CD8-positive, alpha-beta memory T cell (primary cell): ENCODE measurements at regions of chr15 and their contacts with region 1.

Region 1: GRCh38 chr15:39580117-39580484 is 778 bp upstream of the THBS1 start:
- DNase-seq: peak; percentile 66 to 90 (median 86)
- H3K4me3 ChIP-seq: no peak overlapping the region
- H3K4me3 Mint-ChIP-seq: peak overlapping the region; percentile 63 to 89 (median 81)
- H3K27ac ChIP-seq: no peak overlapping the region
- H3K27ac Mint-ChIP-seq: peak overlapping the region in 4 of 8 donors; percentile 25 to 78 (median 30)
- H3K4me1 ChIP-seq: peaks cover 6% of the 10 kb centered on the region
- H3K4me1 Mint-ChIP-seq: peaks cover 18 to 41% (median 30%) of the 10 kb centered on the region in 3 donors
- H3K27me3 ChIP-seq: peaks cover 13% of the 10 kb centered on the region
- H3K27me3 Mint-ChIP-seq: peaks cover 12 to 56% of the 10 kb centered on the region in 2 donors

Region 2: DNA sequence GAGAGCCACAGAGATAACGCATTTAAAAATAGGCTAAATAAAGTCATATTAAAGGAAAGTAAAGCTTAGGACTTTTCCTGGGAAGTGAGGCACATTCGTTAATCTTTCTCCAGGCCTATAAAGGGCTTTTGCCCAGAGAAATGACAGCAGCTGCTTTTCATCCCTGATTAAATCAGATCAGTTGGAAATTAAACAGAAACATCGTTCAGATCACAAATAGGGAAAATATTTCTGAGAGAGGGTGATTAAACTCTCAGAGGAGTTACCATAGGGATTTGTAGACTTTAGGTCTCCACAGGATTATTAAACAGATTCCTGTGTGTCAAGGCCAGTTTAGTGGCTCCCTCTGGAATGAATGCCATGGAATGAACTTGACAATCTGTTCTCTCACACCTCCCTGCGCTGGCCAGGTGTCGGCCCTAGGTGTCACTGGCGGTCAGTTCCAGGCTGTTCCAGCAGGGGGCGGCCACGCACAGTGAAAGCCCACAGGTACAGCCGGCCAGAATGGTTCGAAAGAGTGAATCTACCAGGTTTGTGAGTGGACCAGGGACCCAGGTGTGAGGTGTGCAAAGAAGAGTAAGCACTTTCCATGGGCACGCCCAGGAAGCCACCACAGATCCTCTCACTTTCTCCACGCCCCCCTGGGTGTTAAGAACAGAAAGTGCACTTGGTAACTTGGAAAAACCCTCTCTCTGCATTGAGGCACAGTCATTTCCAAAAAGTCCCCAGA is 762.5 kb before region 1 on chr15:
- CTCF ChIA-PET with region 1: interaction called, 11 read pairs
- POLR2A ChIA-PET with region 1: no interaction called
- DNase-seq: peak; percentile 62 to 83 (median 73)
- H3K4me3 ChIP-seq: no peak overlapping the region
- H3K4me3 Mint-ChIP-seq: peak overlapping the region in 2 of 7 donors; percentile 31 to 59
- H3K27ac ChIP-seq: no peak overlapping the region
- H3K27ac Mint-ChIP-seq: peak overlapping the region in 1 of 8 donors; percentile 17
- H3K4me1 ChIP-seq: no peaks in the 10 kb centered on the region
- H3K4me1 Mint-ChIP-seq: peaks cover 2 to 5% (median 5%) of the 10 kb centered on the region in 3 donors
- H3K27me3 ChIP-seq: no peaks in the 10 kb centered on the region
- H3K27me3 Mint-ChIP-seq: peaks cover 2 to 14% of the 10 kb centered on the region in 2 donors

Region 3: GRCh38 chr15:39124553-39125171 is 455.4 kb before region 1 on chr15:
- CTCF ChIA-PET with region 1: interaction called, 12 read pairs
- POLR2A ChIA-PET with region 1: no interaction called
- DNase-seq: no peak
- H3K4me3 ChIP-seq: no peak overlapping the region
- H3K4me3 Mint-ChIP-seq: no peak overlapping the region
- H3K27ac ChIP-seq: no peak overlapping the region
- H3K27ac Mint-ChIP-seq: no peak overlapping the region
- H3K4me1 ChIP-seq: no peaks in the 10 kb centered on the region
- H3K4me1 Mint-ChIP-seq: no peaks in the 10 kb centered on the region
- H3K27me3 ChIP-seq: no peaks in the 10 kb centered on the region
- H3K27me3 Mint-ChIP-seq: peaks cover 6 to 8% of the 10 kb centered on the region in 2 donors

Region 4: DNA sequence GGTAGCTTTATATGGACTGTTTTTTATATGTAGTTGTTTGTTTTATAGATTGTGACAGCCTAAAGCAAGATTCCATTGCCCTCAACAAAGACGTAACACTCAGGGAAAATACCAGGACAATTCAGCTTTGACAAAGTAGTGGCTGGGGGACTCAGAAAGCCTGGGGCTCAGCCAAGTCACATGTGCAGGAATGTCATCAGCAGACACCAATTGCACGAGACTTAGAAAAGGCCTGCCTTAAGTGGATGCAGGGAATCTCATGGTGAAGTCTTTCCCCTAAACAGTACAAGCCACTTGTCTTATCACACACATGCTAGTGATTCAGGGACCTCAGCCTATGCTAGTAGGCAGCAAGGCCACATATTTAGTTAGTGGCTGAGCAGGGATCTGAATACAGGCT is 381.0 kb before region 1 on chr15:
- CTCF ChIA-PET with region 1: no interaction called
- POLR2A ChIA-PET with region 1: no interaction called
- DNase-seq: no peak
- H3K4me3 ChIP-seq: no peak overlapping the region
- H3K4me3 Mint-ChIP-seq: no peak overlapping the region
- H3K27ac ChIP-seq: no peak overlapping the region
- H3K27ac Mint-ChIP-seq: no peak overlapping the region
- H3K4me1 ChIP-seq: no peaks in the 10 kb centered on the region
- H3K4me1 Mint-ChIP-seq: no peaks in the 10 kb centered on the region
- H3K27me3 ChIP-seq: no peaks in the 10 kb centered on the region
- H3K27me3 Mint-ChIP-seq: peaks cover 5 to 29% of the 10 kb centered on the region in 2 donors

Region 5: DNA sequence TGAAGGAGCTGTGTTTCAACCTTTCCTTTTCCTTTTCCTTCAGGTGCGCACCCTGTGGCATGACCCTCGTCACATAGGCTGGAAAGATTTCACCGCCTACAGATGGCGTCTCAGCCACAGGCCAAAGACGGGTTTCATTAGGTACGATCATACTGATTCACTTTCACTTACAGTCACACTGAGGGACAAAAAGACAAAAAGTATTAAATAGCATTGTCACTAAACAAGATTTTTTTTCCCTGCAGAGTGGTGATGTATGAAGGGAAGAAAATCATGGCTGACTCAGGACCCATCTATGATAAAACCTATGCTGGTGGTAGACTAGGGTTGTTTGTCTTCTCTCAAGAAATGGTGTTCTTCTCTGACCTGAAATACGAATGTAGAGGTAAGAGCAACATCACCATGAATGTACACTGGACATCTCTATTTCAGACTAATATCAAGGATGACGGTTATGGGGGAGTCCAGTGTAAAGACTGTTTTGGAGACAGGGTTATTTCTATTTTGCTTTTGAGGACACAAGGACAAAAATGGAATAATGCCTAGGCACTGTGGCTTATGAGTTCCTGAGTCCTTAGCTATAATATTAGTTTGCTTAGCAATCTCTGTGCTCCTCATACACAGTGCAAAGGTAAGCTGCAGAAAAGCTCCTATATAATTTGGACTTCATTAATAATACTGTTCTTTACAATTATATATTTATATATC is 14.1 kb after region 1 on chr15:
- CTCF ChIA-PET with region 1: interaction called, 14 read pairs
- POLR2A ChIA-PET with region 1: interaction called, 3 read pairs
- DNase-seq: peak in 4 of 5 donors; percentile 18 to 65 (median 32)
- H3K4me3 ChIP-seq: no peak overlapping the region
- H3K4me3 Mint-ChIP-seq: peak overlapping the region in 5 of 7 donors; percentile 19 to 70 (median 56)
- H3K27ac ChIP-seq: no peak overlapping the region
- H3K27ac Mint-ChIP-seq: peak overlapping the region in 7 of 8 donors; percentile 65 to 92 (median 86)
- H3K4me1 ChIP-seq: no peaks in the 10 kb centered on the region
- H3K4me1 Mint-ChIP-seq: peaks cover 7 to 8% (median 7%) of the 10 kb centered on the region in 3 donors
- H3K27me3 ChIP-seq: no peaks in the 10 kb centered on the region
- H3K27me3 Mint-ChIP-seq: no peaks in the 10 kb centered on the region

Region 6: GRCh38 chr15:39657714-39658113 is 77.6 kb after region 1 on chr15:
- CTCF ChIA-PET with region 1: no interaction called
- POLR2A ChIA-PET with region 1: no interaction called
- DNase-seq: no peak
- H3K4me3 ChIP-seq: no peak overlapping the region
- H3K4me3 Mint-ChIP-seq: no peak overlapping the region
- H3K27ac ChIP-seq: no peak overlapping the region
- H3K27ac Mint-ChIP-seq: no peak overlapping the region
- H3K4me1 ChIP-seq: no peaks in the 10 kb centered on the region
- H3K4me1 Mint-ChIP-seq: no peaks in the 10 kb centered on the region
- H3K27me3 ChIP-seq: no peaks in the 10 kb centered on the region
- H3K27me3 Mint-ChIP-seq: peaks cover 0 to 3% of the 10 kb centered on the region in 2 donors

Region 7: DNA sequence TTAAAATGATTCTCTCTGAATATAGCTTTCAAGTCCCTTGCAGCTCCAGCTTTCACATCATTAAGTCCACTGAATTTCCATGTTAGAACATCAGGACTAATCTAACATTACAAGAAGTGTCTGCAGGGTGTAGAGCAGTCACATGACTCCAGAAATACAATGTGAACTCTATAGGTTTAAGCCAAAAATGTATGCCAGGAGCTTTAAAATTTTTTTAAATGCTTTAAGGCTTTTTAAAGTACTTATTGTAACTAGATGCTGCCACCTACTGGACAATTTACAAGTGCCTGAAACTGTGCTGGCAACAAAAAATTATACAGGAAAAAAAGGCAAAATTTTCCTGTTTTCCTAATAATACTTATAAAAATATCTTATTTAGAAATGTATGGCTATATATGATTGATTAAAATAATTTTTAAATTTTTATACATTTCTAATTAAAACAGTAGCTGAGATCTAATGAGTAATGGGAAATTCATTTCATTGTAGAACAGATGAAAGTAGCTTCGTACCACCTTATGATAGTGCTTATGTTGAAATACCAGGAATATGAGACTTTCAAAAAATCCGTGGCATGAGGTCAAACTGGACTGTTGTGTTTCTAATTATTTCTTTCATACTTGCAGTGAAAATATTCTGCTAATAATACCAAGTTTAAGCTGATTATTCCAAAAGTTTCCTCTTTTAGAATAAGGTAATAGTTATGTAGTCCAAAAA is 176.9 kb after region 1 on chr15:
- CTCF ChIA-PET with region 1: interaction called, 116 read pairs
- POLR2A ChIA-PET with region 1: no interaction called
- DNase-seq: peak in 3 of 5 donors; percentile 6 to 42 (median 32)
- H3K4me3 ChIP-seq: no peak overlapping the region
- H3K4me3 Mint-ChIP-seq: no peak overlapping the region
- H3K27ac ChIP-seq: no peak overlapping the region
- H3K27ac Mint-ChIP-seq: no peak overlapping the region
- H3K4me1 ChIP-seq: no peaks in the 10 kb centered on the region
- H3K4me1 Mint-ChIP-seq: peaks cover 0 to 11% (median 0%) of the 10 kb centered on the region in 3 donors
- H3K27me3 ChIP-seq: no peaks in the 10 kb centered on the region
- H3K27me3 Mint-ChIP-seq: peaks cover 0 to 3% of the 10 kb centered on the region in 2 donors